PC-3 (cell line): ENCODE measurements at regions of chr1 and their contacts with region 1.

Region 1: DNA sequence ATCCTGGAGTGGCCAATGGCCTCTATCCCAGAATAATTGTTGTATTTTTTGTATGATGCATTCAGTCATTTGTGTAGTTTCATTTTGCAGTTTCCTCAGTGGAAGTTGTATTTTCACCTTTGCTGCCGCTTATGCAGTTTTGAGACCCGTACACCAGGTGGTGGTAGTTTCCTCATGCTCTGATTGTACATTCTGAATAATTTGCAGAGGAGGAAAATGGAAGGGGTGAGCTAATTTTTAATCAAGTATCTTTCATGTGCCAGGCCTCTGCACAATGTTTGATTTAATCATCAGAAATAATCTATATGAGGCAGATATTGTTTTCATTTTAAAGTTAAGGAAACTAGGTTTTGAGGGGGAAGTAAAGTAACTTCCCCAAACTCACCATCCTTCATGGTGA is 29.5 kb downstream of the HLX start:
- DNase-seq: peak; percentile 62
- ATAC-seq: no peak
- H3K4me3 ChIP-seq: no peak overlapping the region
- H3K27ac ChIP-seq: no peak overlapping the region
- H3K4me1 ChIP-seq: peaks cover 24% of the 10 kb centered on the region
- H3K27me3 ChIP-seq: no peaks in the 10 kb centered on the region
- CTCF ChIP-seq: peak; percentile 89

Region 2: DNA sequence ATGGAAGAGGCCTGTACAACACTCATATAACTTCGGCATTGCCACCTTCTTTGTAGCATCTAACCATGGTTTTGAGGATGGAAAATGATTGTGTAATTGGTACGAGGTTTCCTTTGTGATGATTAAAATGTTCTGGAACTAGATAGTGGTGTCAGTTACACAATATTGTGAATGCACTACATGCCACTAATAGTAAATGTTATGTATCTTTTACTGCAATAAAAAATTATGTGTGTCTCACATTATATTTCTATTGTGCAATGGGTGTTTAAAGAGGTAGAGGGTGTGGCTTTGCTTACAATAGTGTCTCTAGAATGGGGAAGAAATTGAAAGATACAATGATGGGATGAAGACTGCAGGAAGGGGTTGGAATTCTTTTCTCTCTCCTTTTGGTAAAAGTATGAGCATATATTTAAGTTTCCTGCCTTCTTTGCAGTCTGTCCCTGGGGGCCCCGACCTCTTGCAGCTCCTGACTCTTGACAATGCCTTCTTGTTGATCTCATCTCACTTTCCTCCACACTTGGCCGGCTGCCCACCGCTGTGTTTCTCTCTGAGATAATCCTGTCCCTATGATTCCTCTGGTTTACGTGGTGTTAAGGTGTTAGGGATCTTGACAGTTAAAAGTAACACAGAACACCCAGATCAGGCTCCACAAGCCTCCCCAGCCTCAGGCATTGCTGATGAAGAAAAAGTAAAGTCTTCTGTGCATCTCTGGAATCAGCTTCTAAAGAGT is 82.8 kb before region 1 on chr1:
- CTCF ChIA-PET with region 1: no interaction called
- POLR2A ChIA-PET with region 1: no interaction called
- intact Hi-C with region 1: no loop called
- DNase-seq: no peak
- ATAC-seq: no peak
- H3K4me3 ChIP-seq: no peak overlapping the region
- H3K27ac ChIP-seq: no peak overlapping the region
- H3K4me1 ChIP-seq: no peaks in the 10 kb centered on the region
- H3K27me3 ChIP-seq: no peaks in the 10 kb centered on the region
- CTCF ChIP-seq: no peak

Region 3: GRCh38 chr1:220879076-220879508 is 29.7 kb before region 1 on chr1 and contains the start of gene HLX:
- CTCF ChIA-PET with region 1: no interaction called
- POLR2A ChIA-PET with region 1: no interaction called
- intact Hi-C with region 1: loop called (anchors 2 kb)
- DNase-seq: peak; percentile 96
- ATAC-seq: peak; percentile 89
- H3K4me3 ChIP-seq: peak within 1 kb of the TSS; percentile 85
- H3K27ac ChIP-seq: peak within 1 kb of the TSS; percentile 20
- H3K4me1 ChIP-seq: peaks cover 16% of the 10 kb centered on the region; the same call in 1 of the 2 replicates
- H3K27me3 ChIP-seq: no peaks in the 10 kb centered on the region
- CTCF ChIP-seq: no peak
- total RNA-seq, gene HLX: 4.0 and 8.1 TPM in 2 replicates

Region 4: DNA sequence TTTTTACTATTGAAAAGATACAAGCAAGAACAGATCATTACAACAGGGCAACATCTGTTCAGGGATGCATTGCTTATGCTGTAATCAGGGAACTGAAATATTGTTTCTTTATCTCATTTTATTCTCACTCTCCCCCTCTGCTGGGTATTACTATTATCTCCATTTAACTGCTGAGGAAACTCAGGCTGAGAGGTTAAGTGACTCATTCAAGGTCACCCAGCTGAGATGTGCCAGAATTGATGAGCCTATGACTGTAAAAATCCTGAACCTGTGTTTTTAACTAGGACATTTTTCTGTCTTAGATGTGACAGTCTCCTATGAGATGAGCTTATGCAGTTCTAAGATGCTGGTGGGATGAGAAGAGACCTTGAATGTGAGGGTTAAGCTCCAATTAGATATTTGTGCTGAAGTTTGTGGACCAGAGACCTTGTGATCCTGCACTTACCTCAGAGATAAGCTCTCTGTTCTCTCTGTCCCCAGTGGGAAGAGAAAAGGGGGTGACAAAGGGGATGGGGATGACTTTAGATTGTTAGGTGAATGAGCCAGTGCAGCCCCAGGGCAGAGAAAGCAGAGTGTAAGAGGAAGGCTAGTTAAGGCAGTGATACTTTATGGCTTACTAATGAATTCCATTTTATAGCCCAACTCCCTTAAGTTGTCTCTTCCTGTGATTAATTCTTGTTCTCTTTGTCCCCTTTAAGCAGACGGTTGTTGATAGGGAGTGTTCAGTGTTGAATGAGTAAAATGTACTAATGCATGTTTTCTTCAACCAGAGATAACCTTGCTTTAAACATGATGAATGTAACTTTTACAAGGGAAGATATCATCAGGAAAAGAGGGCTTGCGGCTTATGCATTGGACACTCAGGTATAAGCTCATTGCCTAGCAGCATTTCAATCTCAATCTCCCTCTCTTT is 81.9 kb after region 1 on chr1:
- CTCF ChIA-PET with region 1: no interaction called
- POLR2A ChIA-PET with region 1: no interaction called
- intact Hi-C with region 1: loop called (anchors 2 kb)
- DNase-seq: peak; percentile 85
- ATAC-seq: peak; percentile 87
- H3K4me3 ChIP-seq: no peak overlapping the region
- H3K27ac ChIP-seq: peak overlapping the region; percentile 56
- H3K4me1 ChIP-seq: peaks cover 20% of the 10 kb centered on the region
- H3K27me3 ChIP-seq: no peaks in the 10 kb centered on the region
- CTCF ChIP-seq: peak; percentile 63

Region 5: GRCh38 chr1:221045842-221046831 is 137.4 kb after region 1 on chr1:
- CTCF ChIA-PET with region 1: no interaction called
- POLR2A ChIA-PET with region 1: no interaction called
- intact Hi-C with region 1: no loop called
- DNase-seq: no peak
- ATAC-seq: no peak; the same call in 1 of the 2 replicates
- H3K4me3 ChIP-seq: no peak overlapping the region
- H3K27ac ChIP-seq: no peak overlapping the region
- H3K4me1 ChIP-seq: no peaks in the 10 kb centered on the region
- H3K27me3 ChIP-seq: no peaks in the 10 kb centered on the region
- CTCF ChIP-seq: no peak

Region 6: GRCh38 chr1:221089266-221089665 is 180.5 kb after region 1 on chr1:
- CTCF ChIA-PET with region 1: no interaction called
- POLR2A ChIA-PET with region 1: no interaction called
- intact Hi-C with region 1: loop called (anchors 1 kb)
- DNase-seq: peak; percentile 89
- ATAC-seq: peak; percentile 86
- H3K4me3 ChIP-seq: peak overlapping the region; percentile 17; the same call in 1 of the 2 replicates
- H3K27ac ChIP-seq: peak overlapping the region; percentile 30
- H3K4me1 ChIP-seq: peaks cover 54% of the 10 kb centered on the region
- H3K27me3 ChIP-seq: no peaks in the 10 kb centered on the region
- CTCF ChIP-seq: no peak

Region 7: DNA sequence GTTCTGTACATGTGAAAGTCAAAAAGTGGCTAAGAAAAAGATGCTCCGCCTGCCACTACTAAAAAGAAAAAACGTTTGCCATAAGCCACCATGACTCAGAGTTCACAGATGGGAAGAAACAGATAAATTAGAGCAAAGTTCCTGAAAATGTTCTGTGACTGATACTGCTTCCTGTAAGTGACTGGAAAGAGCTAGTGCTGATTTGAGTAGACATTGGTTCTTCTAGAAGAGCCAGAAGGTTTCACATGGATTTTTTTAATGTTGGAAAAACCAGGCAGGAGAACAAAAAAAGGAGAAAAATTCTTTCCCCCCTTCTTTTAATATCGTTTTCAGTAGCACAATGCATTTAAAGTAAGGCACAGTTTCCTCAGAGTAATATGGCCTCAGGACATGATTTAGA is 191.9 kb after region 1 on chr1:
- CTCF ChIA-PET with region 1: no interaction called
- POLR2A ChIA-PET with region 1: no interaction called
- intact Hi-C with region 1: loop called (anchors 5 kb)
- DNase-seq: peak; percentile 89
- ATAC-seq: peak; percentile 62
- H3K4me3 ChIP-seq: no peak overlapping the region
- H3K27ac ChIP-seq: peak overlapping the region; percentile 62
- H3K4me1 ChIP-seq: peaks cover 58% of the 10 kb centered on the region
- H3K27me3 ChIP-seq: no peaks in the 10 kb centered on the region
- CTCF ChIP-seq: no peak

Region 8: GRCh38 chr1:221184131-221184794 is 275.5 kb after region 1 on chr1:
- CTCF ChIA-PET with region 1: interaction called, 11 read pairs
- POLR2A ChIA-PET with region 1: no interaction called
- intact Hi-C with region 1: no loop called
- DNase-seq: peak; percentile 18
- ATAC-seq: peak; percentile 33; the same call in 1 of the 2 replicates
- H3K4me3 ChIP-seq: 0 out of 2 replicates have a peak overlapping the region, but pooled peaks have one; percentile 9
- H3K27ac ChIP-seq: no peak overlapping the region
- H3K4me1 ChIP-seq: peaks cover 6% of the 10 kb centered on the region; the same call in 1 of the 2 replicates
- H3K27me3 ChIP-seq: no peaks in the 10 kb centered on the region
- CTCF ChIP-seq: no peak

Region 9: GRCh38 chr1:221272940-221273339 is 364.2 kb after region 1 on chr1:
- CTCF ChIA-PET with region 1: no interaction called
- POLR2A ChIA-PET with region 1: no interaction called
- intact Hi-C with region 1: loop called (anchors 1 kb)
- DNase-seq: peak; percentile 68
- ATAC-seq: peak; percentile 88
- H3K4me3 ChIP-seq: no peak overlapping the region
- H3K27ac ChIP-seq: no peak overlapping the region
- H3K4me1 ChIP-seq: no peaks in the 10 kb centered on the region
- H3K27me3 ChIP-seq: no peaks in the 10 kb centered on the region
- CTCF ChIP-seq: peak; percentile 81